Mammary epithelial cell (primary cell): ENCODE measurements at regions of chr1 and their contacts with region 1.

Region 1: DNA sequence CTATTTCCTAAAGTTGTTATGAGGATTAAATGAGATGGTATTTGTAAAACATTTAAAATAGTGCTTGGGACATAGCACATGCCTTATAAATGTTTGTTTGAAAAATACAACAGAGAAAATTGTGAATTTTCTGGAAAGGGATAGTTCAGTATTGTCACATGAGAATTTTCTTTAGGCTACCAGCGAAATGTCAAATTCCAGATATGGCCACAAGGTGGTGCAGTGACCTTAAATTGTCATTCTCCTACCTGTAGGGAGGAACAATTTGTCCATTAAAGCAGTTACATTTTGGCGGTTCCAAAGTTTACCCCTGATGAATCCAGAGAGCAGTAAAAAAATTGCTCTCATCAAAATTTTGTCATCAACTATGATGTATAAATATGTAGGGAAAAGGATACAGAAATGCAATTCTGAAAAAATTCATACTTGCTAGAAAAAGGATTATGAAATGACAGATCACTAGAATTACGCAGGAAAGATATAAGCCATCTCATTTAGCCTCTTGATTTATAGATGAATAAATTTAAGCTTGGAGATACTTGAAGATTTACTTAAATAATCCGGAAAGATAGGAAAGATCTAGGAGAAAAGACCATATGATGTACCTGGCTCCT is 50.2 kb upstream of the TSHB start:
- DNase-seq: peak; percentile 39
- H3K4me3 ChIP-seq: no peak overlapping the region
- H3K27ac ChIP-seq: no peak overlapping the region
- H3K4me1 ChIP-seq: no peaks in the 10 kb centered on the region
- H3K27me3 ChIP-seq: no peaks in the 10 kb centered on the region
- CTCF ChIP-seq: peak; percentile 70 to 72

Region 2: GRCh38 chr1:114794038-114794437 is 185.3 kb before region 1 on chr1:
- CTCF ChIA-PET with region 1: no interaction called
- dilution Hi-C with region 1: no loop called
- in situ Hi-C with region 1: no loop called
- intact Hi-C with region 1: no loop called
- DNase-seq: no peak
- H3K4me3 ChIP-seq: no peak overlapping the region
- H3K27ac ChIP-seq: no peak overlapping the region
- H3K4me1 ChIP-seq: no peaks in the 10 kb centered on the region
- H3K27me3 ChIP-seq: no peaks in the 10 kb centered on the region
- CTCF ChIP-seq: no peak

Region 3: DNA sequence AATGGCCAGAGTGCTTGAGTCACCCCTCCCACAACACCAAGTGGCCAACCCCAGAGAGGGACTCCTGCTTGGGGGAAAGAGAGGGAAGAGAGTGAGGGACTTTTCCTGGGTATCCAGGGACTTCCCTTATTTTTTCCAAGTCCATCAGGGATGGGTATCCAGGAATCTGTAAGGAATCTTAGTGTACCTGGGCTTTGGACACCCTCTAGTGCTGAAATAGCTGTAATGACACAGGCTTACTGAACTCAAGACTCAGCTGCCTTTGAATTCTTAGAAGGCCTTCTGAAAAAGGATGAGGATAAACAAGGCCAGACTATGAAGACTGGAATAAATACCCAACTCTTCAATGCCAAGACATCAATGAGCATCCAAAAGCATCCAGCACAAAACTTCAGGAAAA is 62.3 kb after region 1 on chr1:
- CTCF ChIA-PET with region 1: interaction called, 6 read pairs
- dilution Hi-C with region 1: no loop called
- in situ Hi-C with region 1: loop called (anchors 10 kb)
- intact Hi-C with region 1: loop called (anchors 1 kb)
- DNase-seq: peak; percentile 33
- H3K4me3 ChIP-seq: no peak overlapping the region
- H3K27ac ChIP-seq: no peak overlapping the region
- H3K4me1 ChIP-seq: no peaks in the 10 kb centered on the region
- H3K27me3 ChIP-seq: no peaks in the 10 kb centered on the region
- CTCF ChIP-seq: peak; percentile 62 to 83

Region 4: GRCh38 chr1:115052454-115053083 is 73.2 kb after region 1 on chr1:
- CTCF ChIA-PET with region 1: no interaction called
- dilution Hi-C with region 1: no loop called
- in situ Hi-C with region 1: no loop called
- intact Hi-C with region 1: loop called (anchors 1 kb)
- DNase-seq: peak; percentile 63
- H3K4me3 ChIP-seq: no peak overlapping the region
- H3K27ac ChIP-seq: no peak overlapping the region
- H3K4me1 ChIP-seq: peaks cover 12% of the 10 kb centered on the region
- H3K27me3 ChIP-seq: no peaks in the 10 kb centered on the region
- CTCF ChIP-seq: peak; percentile 87 to 94

Region 5: DNA sequence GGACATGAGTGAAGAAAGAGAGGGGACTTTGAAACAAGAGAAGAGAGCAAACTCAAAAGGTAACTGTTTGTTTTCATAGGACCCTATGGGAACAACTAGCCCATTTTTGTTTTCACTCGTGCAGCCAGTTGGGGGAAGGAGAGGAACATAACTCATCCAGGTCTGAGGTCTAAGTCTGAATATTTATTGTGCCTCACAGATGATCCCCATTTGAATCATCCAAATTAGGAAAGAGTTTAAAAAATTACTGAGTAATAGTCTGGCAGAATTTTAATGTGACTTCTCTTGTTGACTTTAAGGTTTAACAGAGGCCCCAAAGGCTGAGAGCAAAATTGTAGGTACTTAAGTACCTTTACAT is 120.3 kb after region 1 on chr1:
- CTCF ChIA-PET with region 1: no interaction called
- dilution Hi-C with region 1: no loop called
- in situ Hi-C with region 1: loop called in 1 of 2 experiments (anchors 10 kb)
- intact Hi-C with region 1: no loop called
- DNase-seq: peak; percentile 58
- H3K4me3 ChIP-seq: no peak overlapping the region
- H3K27ac ChIP-seq: no peak overlapping the region
- H3K4me1 ChIP-seq: no peaks in the 10 kb centered on the region
- H3K27me3 ChIP-seq: no peaks in the 10 kb centered on the region
- CTCF ChIP-seq: no peak

Region 6: GRCh38 chr1:115112496-115113375 is 133.4 kb after region 1 on chr1:
- CTCF ChIA-PET with region 1: no interaction called
- dilution Hi-C with region 1: no loop called
- in situ Hi-C with region 1: loop called (anchors 10 kb)
- intact Hi-C with region 1: loop called (anchors 1 kb)
- DNase-seq: no peak
- H3K4me3 ChIP-seq: no peak overlapping the region
- H3K27ac ChIP-seq: no peak overlapping the region
- H3K4me1 ChIP-seq: peaks cover 23% of the 10 kb centered on the region
- H3K27me3 ChIP-seq: no peaks in the 10 kb centered on the region
- CTCF ChIP-seq: peak; percentile 93 to 94

Region 7: GRCh38 chr1:115469703-115470476 is 490.5 kb after region 1 on chr1:
- CTCF ChIA-PET with region 1: no interaction called
- dilution Hi-C with region 1: no loop called
- in situ Hi-C with region 1: no loop called
- intact Hi-C with region 1: loop called (anchors 2 kb)
- DNase-seq: peak; percentile 74
- H3K4me3 ChIP-seq: no peak overlapping the region
- H3K27ac ChIP-seq: peak overlapping the region; percentile 31
- H3K4me1 ChIP-seq: peaks cover 28% of the 10 kb centered on the region
- H3K27me3 ChIP-seq: no peaks in the 10 kb centered on the region
- CTCF ChIP-seq: peak; percentile 93 to 98